Activated CD8-positive, alpha-beta T cell treated with anti-CD3 and anti-CD28 coated beads for 36 hours (primary cell): ENCODE measurements at regions of chr13 and their contacts with region 1.

Region 1: GRCh38 chr13:27919934-27920676 is at the start of gene PDX1:
- DNase-seq: peak; percentile 54
- ATAC-seq: peak; percentile 12
- H3K4me3 Mint-ChIP-seq: peak within 1 kb of the TSS; percentile 67
- H3K27ac Mint-ChIP-seq: no peak within 1 kb of the TSS
- H3K4me1 Mint-ChIP-seq: peaks cover 36% of the 10 kb centered on the region
- H3K27me3 Mint-ChIP-seq: peaks cover 77% of the 10 kb centered on the region
- CTCF ChIP-seq: no peak
- total RNA-seq, gene PDX1: not detected

Region 2: GRCh38 chr13:27792393-27793218 is 127.5 kb before region 1 on chr13 and contains the start of gene GSX1:
- CTCF ChIA-PET with region 1: no interaction called
- POLR2A ChIA-PET with region 1: no interaction called
- intact Hi-C with region 1: loop called (anchors 10 kb)
- DNase-seq: peak; percentile 73
- ATAC-seq: peak; percentile 78
- H3K4me3 Mint-ChIP-seq: peak within 1 kb of the TSS; percentile 72
- H3K27ac Mint-ChIP-seq: no peak within 1 kb of the TSS
- H3K4me1 Mint-ChIP-seq: peaks cover 32% of the 10 kb centered on the region
- H3K27me3 Mint-ChIP-seq: peaks cover 79% of the 10 kb centered on the region
- CTCF ChIP-seq: no peak
- total RNA-seq, gene GSX1: not detected